HepG2 (cell line): ENCODE measurements at regions of chr2 and their contacts with region 1.

Region 1: DNA sequence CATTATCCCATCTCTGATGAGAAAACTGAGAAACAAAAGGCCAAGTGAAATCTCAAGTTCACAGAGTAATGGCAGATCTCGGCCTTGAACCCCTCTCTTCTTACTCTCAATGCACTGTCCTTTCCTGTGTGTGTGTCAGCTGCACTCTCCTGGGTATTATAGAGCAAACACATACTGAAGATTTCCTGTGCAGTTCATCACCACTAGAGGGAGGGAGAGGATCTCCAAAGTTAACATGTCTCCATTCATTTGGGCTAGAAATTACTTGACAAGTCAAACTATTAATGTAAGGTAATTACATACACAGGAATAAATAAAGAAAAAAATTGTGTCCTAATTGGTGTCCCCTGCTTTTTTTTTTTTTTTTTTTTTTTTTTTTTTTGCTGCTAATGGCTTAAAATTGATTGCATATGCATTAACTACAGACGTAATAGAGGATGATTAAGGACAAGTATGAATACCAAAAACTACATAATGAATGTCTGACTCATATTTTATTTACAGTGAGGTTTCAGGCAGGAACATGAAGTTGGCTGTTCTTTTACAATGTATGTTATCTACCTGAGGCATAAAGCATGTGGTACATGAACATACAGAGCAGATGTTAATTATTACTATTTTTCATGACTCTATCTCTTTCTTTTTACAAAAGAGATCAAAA is 269.2 kb downstream of the NYAP2 start:
- DNase-seq: peak; percentile 65
- ATAC-seq: peak; percentile 95
- H3K4me3 ChIP-seq: no peak overlapping the region
- H3K27ac ChIP-seq: no peak overlapping the region
- H3K4me1 ChIP-seq: no peaks in the 10 kb centered on the region
- H3K27me3 ChIP-seq: no peaks in the 10 kb centered on the region
- CTCF ChIP-seq: peak; percentile 85
- EP300 ChIP-seq: no peak
- POLR2A ChIP-seq: no peak
- RAD21 ChIP-seq: 0 out of 2 replicates have a peak, but pooled peaks have one; percentile 31

Region 2: DNA sequence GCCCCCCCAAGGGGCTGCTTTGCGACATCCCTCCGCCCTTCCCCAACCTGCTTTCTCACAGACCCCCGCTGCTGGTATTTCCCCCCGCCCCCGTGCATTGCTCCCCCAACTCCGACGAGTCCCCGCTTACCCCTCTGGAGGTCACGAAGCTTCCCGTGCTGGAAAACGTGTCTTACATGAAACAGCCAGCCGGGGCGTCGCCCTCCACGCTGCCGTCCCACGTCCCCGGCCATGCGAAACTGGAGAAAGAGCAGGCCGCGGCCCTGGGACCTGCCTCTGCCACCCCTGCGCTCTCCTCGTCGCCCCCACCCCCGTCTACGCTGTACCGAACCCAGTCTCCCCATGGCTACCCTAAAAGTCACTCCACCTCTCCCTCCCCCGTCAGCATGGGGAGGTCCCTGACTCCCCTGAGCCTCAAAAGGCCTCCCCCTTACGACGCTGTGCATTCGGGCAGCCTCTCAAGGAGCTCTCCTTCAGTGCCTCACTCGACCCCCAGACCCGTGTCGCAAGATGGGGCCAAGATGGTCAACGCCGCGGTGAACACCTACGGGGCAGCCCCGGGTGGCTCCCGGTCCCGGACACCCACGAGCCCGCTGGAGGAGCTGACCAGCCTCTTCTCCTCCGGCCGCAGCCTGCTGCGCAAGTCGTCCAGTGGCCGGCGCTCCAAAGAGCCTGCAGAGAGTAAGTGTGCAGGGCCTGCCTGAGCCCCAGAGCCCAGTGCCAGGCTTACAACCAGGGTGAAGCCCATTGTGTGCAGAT is 86.2 kb before region 1 on chr2:
- CTCF ChIA-PET with region 1: no interaction called
- POLR2A ChIA-PET with region 1: no interaction called
- in situ Hi-C with region 1: no loop called
- intact Hi-C with region 1: no loop called
- DNase-seq: no peak
- ATAC-seq: no peak
- H3K4me3 ChIP-seq: no peak overlapping the region
- H3K27ac ChIP-seq: no peak overlapping the region
- H3K4me1 ChIP-seq: no peaks in the 10 kb centered on the region
- H3K27me3 ChIP-seq: no peaks in the 10 kb centered on the region
- CTCF ChIP-seq: no peak
- EP300 ChIP-seq: no peak
- POLR2A ChIP-seq: no peak
- RAD21 ChIP-seq: no peak

Region 3: DNA sequence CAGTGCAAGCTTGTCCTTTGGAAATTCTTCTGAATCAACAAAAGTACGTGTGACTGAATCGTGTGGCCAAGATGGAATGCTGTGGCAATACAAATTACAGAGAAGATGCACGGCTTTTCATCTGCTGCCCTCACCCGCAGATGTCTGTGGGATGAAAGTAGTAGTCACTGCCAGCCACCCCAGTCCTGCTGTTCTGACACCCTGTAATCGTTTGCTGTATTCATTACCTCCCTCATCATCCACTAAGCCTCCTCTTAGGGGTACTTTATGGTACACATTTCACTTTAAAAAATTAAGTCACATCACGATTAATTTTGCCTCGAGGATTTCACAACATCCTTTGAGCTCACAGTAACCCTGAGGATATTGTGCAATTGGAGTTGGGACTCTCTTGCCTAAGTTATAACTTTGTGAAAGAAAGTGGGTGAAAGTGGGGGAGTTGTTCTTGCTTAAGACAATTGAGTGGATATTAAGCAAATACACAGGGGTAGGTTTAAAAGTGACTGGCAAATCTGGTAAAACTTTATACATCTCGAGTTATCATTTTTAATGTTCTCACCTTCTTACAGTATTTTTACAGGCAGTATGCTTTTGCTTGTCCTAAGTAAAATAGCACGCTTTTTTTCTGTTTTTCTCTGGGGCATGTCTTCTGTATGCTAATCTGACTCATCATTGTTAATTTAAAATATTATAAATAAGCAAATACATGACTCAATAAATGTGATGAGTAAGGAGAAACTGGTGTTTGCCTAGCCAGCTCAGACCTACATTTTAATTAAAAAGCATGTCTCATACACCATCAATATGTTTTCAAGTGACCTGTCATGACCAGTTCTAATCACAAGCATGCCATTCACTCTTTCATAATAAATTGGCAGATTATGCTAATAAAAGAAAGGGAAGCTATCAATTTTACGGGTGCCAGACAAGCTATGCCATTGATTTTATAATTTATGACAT is 450.0 kb after region 1 on chr2:
- CTCF ChIA-PET with region 1: no interaction called
- POLR2A ChIA-PET with region 1: no interaction called
- in situ Hi-C with region 1: no loop called
- intact Hi-C with region 1: loop called (anchors 5 kb)
- DNase-seq: peak; percentile 81
- ATAC-seq: peak; percentile 81
- H3K4me3 ChIP-seq: peak overlapping the region; percentile 42 to 51 (median 42); a peak in 5 of 6 replicates
- H3K27ac ChIP-seq: peak overlapping the region; percentile 54
- H3K4me1 ChIP-seq: peaks cover 65% of the 10 kb centered on the region
- H3K27me3 ChIP-seq: no peaks in the 10 kb centered on the region
- CTCF ChIP-seq: no peak
- EP300 ChIP-seq: peak; percentile 88 to 94; a peak in 3 of 4 replicates
- POLR2A ChIP-seq: no peak
- RAD21 ChIP-seq: no peak

Region 4: DNA sequence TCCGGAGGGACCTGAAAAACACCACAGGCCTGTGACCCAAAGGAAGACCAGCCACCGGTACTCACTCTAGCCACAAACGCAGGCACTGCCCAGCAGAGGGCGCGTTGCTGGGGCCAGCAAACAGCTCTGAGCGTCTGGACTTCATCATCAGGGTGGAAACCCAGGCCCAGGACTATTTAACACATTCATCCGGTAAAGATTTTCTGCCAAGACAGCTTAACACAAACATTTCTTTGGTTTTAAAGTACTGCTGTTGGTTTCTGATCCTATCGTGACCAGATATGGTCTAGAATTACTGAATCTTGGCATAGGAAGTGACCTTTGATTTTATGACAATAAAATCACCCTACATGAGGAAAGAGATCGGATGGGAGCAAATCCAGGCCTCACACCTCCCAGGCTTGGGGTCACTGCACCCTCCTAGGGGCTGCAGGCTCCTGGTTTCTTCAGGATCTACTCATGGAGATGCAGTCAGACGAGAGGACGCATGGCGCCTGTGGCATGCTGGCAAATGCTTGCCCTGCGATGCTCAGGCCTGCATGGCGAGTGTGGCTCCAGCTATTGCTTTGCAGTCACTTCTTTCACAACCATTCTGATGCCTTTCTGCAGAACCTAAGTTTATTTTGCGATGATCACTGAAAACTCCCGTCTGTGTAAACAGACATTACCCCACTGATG is 1364.9 kb after region 1 on chr2:
- CTCF ChIA-PET with region 1: no interaction called
- POLR2A ChIA-PET with region 1: no interaction called
- in situ Hi-C with region 1: no loop called
- intact Hi-C with region 1: loop called (anchors 1 kb)
- DNase-seq: peak; percentile 43
- ATAC-seq: peak; percentile 99
- H3K4me3 ChIP-seq: no peak overlapping the region
- H3K27ac ChIP-seq: no peak overlapping the region
- H3K4me1 ChIP-seq: peaks cover 7% of the 10 kb centered on the region
- H3K27me3 ChIP-seq: no peaks in the 10 kb centered on the region; a peak in 3 of 5 replicates
- CTCF ChIP-seq: peak; percentile 90
- EP300 ChIP-seq: no peak
- POLR2A ChIP-seq: no peak
- RAD21 ChIP-seq: peak; percentile 70; the same call in 1 of the 2 replicates